WTC11 (cell line): ENCODE measurements at regions of chr20 and their contacts with region 1.

Region 1: GRCh38 chr20:34022154-34022838 is 28.6 kb downstream of the RALY start:
- DNase-seq: no peak
- ATAC-seq: peak; percentile 74
- H3K4me3 Mint-ChIP-seq: no peak overlapping the region
- H3K27ac Mint-ChIP-seq: no peak overlapping the region; the same call in 1 of the 2 replicates
- H3K4me1 Mint-ChIP-seq: peaks cover 58% of the 10 kb centered on the region
- H3K27me3 Mint-ChIP-seq: no peaks in the 10 kb centered on the region
- CTCF ChIP-seq: no peak

Region 2: DNA sequence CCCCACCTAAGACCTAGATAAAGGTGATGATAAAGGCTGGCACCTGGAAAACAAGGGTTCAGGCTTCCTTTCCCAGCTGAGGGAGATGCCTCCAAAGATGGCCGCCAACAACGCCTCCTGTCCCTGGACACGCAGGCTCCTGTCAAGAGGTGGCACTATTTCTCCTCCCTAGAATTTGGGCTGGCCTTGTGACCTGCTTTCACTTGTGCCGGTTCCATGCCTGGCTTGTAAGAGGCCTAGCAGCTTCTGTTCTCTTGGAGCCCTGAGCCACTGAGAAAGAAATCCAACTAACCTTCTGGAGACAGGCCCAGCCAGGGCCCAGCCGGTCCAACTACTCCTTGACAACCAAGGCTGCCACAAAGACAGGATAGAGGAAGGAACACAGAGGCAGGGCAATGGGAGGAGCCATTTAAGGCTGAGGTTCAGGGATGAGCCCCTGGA is 88.8 kb before region 1 on chr20:
- CTCF ChIA-PET with region 1: interaction called, 10 read pairs
- POLR2A ChIA-PET with region 1: no interaction called
- DNase-seq: peak; percentile 71
- ATAC-seq: peak; percentile 97
- H3K4me3 Mint-ChIP-seq: no peak overlapping the region
- H3K27ac Mint-ChIP-seq: peak overlapping the region; percentile 76
- H3K4me1 Mint-ChIP-seq: no peaks in the 10 kb centered on the region
- H3K27me3 Mint-ChIP-seq: no peaks in the 10 kb centered on the region; the same call in 1 of the 2 replicates
- CTCF ChIP-seq: no peak

Region 3: DNA sequence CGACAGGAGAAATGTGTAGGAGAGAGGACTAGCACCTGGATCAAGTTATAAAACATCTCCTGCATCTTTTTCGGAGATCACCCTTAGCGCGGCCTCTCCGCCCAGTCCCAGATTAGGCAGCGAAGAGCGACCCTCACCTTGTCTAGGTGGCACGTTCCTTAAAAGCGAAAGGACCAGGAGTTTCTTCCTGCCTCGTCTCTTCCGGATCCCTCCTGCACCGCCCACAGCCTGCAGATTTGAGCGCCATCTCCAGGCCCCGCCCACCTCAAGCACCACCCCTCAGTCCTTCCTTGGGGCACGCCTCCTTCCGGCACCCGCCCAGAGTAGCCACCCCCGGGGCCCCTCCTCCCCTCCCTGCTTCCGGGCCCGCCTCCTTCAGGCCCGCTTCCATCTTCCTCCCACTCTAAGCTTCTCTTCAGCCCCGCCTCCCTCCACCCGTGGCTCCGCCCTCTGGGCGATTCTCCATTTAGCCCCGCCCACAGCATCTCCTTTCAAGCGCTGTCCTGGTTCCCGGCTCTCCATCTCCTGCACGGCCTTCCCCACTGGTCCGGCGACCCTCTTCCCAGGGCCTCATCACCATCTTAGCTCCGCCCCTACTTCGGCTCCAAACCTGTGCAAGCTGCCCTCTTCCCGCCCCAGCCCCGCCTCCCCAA is 29.2 kb before region 1 on chr20:
- CTCF ChIA-PET with region 1: interaction called, 17 read pairs
- POLR2A ChIA-PET with region 1: interaction called, 4 read pairs
- DNase-seq: peak; percentile 100
- ATAC-seq: peak; percentile 87
- H3K4me3 Mint-ChIP-seq: peak overlapping the region; percentile 88
- H3K27ac Mint-ChIP-seq: peak overlapping the region; percentile 98
- H3K4me1 Mint-ChIP-seq: peaks cover 34% of the 10 kb centered on the region
- H3K27me3 Mint-ChIP-seq: no peaks in the 10 kb centered on the region
- CTCF ChIP-seq: no peak

Region 4: GRCh38 chr20:34010405-34010931 is 11.8 kb before region 1 on chr20:
- CTCF ChIA-PET with region 1: interaction called, 45 read pairs
- POLR2A ChIA-PET with region 1: interaction called, 3 read pairs
- DNase-seq: no peak
- ATAC-seq: peak; percentile 89
- H3K4me3 Mint-ChIP-seq: peak overlapping the region; percentile 31; the same call in 1 of the 2 replicates
- H3K27ac Mint-ChIP-seq: peak overlapping the region; percentile 92
- H3K4me1 Mint-ChIP-seq: peaks cover 79% of the 10 kb centered on the region
- H3K27me3 Mint-ChIP-seq: no peaks in the 10 kb centered on the region
- CTCF ChIP-seq: no peak